ENCODE measurements at regions of chr11 and their contacts with region 1.

Region 1: GRCh38 chr11:14583252-14584034 is 60.2 kb upstream of the PDE3B start:
- DNase-seq: peak; percentile 29 to 34
- ATAC-seq: peak in 7 of 8 donors; percentile 53 to 80 (median 73)
- H3K4me3 ChIP-seq: no peak overlapping the region
- H3K27ac ChIP-seq: peak overlapping the region in 4 of 10 donors; percentile 11 to 54 (median 32)
- H3K4me1 ChIP-seq: peaks cover 0 to 20% (median 7%) of the 10 kb centered on the region in 9 donors
- H3K27me3 ChIP-seq: no peaks in the 10 kb centered on the region
- CTCF ChIP-seq: no peak

Region 2: GRCh38 chr11:14619603-14620531 is 36.4 kb after region 1 on chr11:
- intact Hi-C with region 1: loop called in 1 of 10 experiments (anchors 1 kb)
- DNase-seq: no peak
- ATAC-seq: peak in 2 of 8 donors; percentile 39 to 41
- H3K4me3 ChIP-seq: no peak overlapping the region
- H3K27ac ChIP-seq: no peak overlapping the region
- H3K4me1 ChIP-seq: peaks cover 0 to 9% (median 0%) of the 10 kb centered on the region in 9 donors
- H3K27me3 ChIP-seq: no peaks in the 10 kb centered on the region
- CTCF ChIP-seq: no peak

Measured in heart right ventricle (tissue), 16 donors.